T-cell (primary cell): ENCODE measurements at regions of chr16 and their contacts with region 1.

Region 1: DNA sequence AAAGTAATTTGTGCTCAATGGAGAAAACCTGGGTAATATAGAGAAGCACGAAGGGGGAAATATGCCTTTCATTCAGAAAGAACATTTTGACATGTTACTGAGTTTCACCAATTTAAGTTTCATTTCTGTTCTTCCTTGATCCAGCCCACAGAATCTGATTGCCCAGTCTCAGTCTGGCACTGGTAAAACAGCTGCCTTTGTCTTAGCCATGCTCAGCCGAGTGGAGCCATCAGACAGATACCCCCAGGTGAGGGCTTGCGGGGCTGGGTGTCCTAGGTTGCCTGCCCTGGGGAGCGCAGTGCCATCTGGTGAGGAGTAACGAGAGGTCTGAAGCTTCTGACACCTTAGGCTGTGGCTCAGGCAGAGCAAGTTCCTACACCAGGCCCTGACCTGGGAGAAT is 17.7 kb downstream of the DDX19A start:
- DNase-seq: no peak
- ATAC-seq: no peak
- H3K4me3 ChIP-seq: no peak overlapping the region
- H3K4me3 Mint-ChIP-seq: no peak overlapping the region
- H3K27ac ChIP-seq: no peak overlapping the region
- H3K27ac Mint-ChIP-seq: no peak overlapping the region
- H3K4me1 ChIP-seq: no peaks in the 10 kb centered on the region
- H3K4me1 Mint-ChIP-seq: no peaks in the 10 kb centered on the region
- H3K27me3 ChIP-seq: no peaks in the 10 kb centered on the region
- H3K27me3 Mint-ChIP-seq: no peaks in the 10 kb centered on the region

Region 2: GRCh38 chr16:70454222-70455034 is 90.0 kb after region 1 on chr16 and contains the start of gene FCSK:
- CTCF ChIA-PET with region 1: interaction called in 1 of 2 experiments, 3 read pairs
- POLR2A ChIA-PET with region 1: interaction called in 1 of 2 experiments, 11 read pairs
- DNase-seq: peak; percentile 9 to 81 (median 57)
- ATAC-seq: peak; percentile 94 to 95 (median 95)
- H3K4me3 ChIP-seq: peak within 1 kb of the TSS; percentile 93 to 98
- H3K4me3 Mint-ChIP-seq: peak within 1 kb of the TSS; percentile 84 to 91 (median 87)
- H3K27ac ChIP-seq: peak within 1 kb of the TSS; percentile 92
- H3K27ac Mint-ChIP-seq: peak within 1 kb of the TSS; percentile 85 to 91
- H3K4me1 ChIP-seq: peaks cover 7 to 23% of the 10 kb centered on the region in 2 experiments
- H3K4me1 Mint-ChIP-seq: peaks cover 18 to 32% (median 28%) of the 10 kb centered on the region in 3 donors
- H3K27me3 ChIP-seq: peaks cover 0 to 2% of the 10 kb centered on the region in 2 experiments
- H3K27me3 Mint-ChIP-seq: no peaks in the 10 kb centered on the region
- total RNA-seq, gene FCSK: 28.7 to 43.4 (median 37.9) TPM